AG04450 (cell line): ENCODE measurements at regions of chr15 and their contacts with region 1.

Region 1: DNA sequence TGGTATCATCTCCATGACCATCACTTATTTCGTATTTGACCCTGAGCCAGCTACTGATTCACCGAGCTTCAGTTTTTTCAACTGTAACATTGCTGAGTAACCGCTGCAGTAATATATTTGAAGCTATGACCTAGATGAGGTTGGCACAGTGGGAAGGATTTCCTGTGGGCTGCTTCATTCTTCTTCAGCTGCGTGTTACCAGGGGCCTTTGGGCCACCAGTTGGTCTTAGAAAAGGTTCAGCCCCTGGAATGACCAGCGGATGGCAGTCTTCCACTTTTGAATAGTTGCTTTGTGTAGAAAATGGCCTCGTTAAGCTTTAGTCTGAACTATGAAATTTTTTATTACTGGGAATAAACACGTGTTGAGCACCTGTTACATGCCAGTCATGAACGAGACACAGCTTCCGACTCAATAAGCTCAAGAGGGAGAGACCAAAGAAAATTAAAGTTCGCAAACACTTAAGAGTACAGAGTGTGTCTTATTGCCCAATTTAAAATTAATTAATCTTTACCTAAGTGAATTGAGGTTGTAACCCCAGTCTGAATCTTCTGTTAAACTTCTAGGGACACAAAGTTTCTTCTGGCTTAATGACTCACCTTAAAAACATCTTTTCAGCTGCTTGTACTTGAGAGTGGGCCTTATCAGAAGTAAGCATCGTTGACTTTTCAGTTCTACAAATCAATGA is 57.6 kb upstream of the NR2E3 start:
- DNase-seq: peak; percentile 46
- H3K4me3 ChIP-seq: no peak overlapping the region
- H3K27ac ChIP-seq: peak overlapping the region; percentile 22
- H3K27me3 ChIP-seq: no peaks in the 10 kb centered on the region
- CTCF ChIP-seq: peak; percentile 47

Region 2: GRCh38 chr15:71471347-71471746 is 281.4 kb before region 1 on chr15:
- CTCF ChIA-PET with region 1: no interaction called
- POLR2A ChIA-PET with region 1: no interaction called
- DNase-seq: no peak
- H3K4me3 ChIP-seq: no peak overlapping the region
- H3K27ac ChIP-seq: no peak overlapping the region
- H3K27me3 ChIP-seq: no peaks in the 10 kb centered on the region
- CTCF ChIP-seq: no peak

Region 3: DNA sequence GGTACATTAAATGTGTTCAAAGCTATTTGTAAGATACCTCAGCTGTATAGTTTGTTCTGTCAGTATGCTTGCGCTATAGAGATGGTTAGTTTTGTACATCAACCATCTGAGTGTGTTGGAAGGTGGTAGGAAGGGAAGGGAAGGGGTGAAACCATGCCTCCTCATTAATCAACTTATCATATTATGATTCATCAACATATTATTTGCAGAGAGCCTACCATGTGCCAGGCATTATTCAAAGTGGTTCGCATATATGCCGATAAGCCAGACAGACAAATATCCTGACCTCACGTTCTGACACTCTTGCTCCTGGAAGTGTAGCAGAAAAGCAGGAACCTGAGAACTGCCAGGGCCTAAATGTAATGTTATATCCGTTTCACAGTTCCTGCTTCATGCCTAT is 190.5 kb before region 1 on chr15:
- CTCF ChIA-PET with region 1: no interaction called
- POLR2A ChIA-PET with region 1: no interaction called
- DNase-seq: no peak
- H3K4me3 ChIP-seq: no peak overlapping the region
- H3K27ac ChIP-seq: no peak overlapping the region
- H3K27me3 ChIP-seq: peaks cover 3% of the 10 kb centered on the region
- CTCF ChIP-seq: no peak

Region 4: DNA sequence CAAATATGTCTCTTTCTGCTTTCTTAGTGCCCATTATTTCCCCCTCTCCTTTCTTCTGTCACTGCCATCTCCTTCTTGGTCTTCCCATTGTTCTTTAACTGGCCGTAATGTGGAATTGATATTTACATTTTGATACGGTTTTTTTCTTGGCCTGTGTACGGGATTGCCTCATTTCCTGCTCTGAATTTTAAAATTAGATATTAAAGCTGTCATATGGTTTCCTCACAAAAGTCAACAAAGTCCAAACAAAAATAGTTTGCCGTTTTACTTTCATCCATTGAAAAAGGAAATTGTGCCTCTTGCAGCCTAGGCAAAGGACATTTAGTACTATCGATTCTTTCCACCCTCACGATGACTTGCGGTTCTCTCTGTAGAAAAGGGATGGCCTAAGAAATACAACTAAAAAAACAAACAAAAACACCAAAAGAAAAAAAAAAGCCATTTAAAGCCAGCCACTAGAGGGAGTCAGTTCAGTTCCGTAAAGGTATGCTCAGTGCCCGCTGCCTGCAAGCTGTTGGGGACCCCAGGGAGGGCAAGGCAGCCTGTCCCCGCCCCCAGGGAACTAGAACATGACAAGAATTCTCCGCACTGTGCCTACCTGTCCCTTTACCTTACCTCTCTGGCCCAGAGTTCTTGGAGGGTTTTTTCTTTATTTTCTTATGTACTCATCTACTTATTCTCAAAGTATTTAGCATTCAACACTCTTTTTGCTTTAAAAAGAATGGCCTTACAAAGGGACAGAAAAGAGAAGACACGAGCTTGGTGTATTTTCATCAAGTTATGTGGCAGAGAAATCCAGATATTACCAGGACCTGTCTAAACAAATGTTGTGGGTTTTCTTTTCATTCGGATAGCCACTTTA is 27.6 kb after region 1 on chr15:
- CTCF ChIA-PET with region 1: interaction called, 16 read pairs
- POLR2A ChIA-PET with region 1: no interaction called
- DNase-seq: no peak
- H3K4me3 ChIP-seq: no peak overlapping the region
- H3K27ac ChIP-seq: no peak overlapping the region
- H3K27me3 ChIP-seq: no peaks in the 10 kb centered on the region
- CTCF ChIP-seq: peak; percentile 82